ENCODE measurements at regions of chrX and their contacts with region 1.

Region 1: GRCh38 chrX:23907498-23908218 is at the starts of genes APOO and CXorf58:
- DNase-seq: peak; percentile 88 to 97 (median 90)
- ATAC-seq: peak; percentile 97
- H3K4me3 ChIP-seq: peak within 1 kb of the TSS; percentile 81
- H3K27ac ChIP-seq: peak within 1 kb of the TSS; percentile 92
- H3K4me1 ChIP-seq: peaks cover 3 to 12% of the 10 kb centered on the region in 2 experiments; a peak in 4 of 5 replicates
- H3K27me3 ChIP-seq: no peaks in the 10 kb centered on the region
- CTCF ChIP-seq: peak; percentile 88 to 99 (median 99)
- EP300 ChIP-seq: peak; percentile 4; the same call in 1 of the 2 replicates
- POLR2A ChIP-seq: peak; percentile 72; the same call in 1 of the 2 replicates
- RAD21 ChIP-seq: peak; percentile 63 to 73
- polyA plus RNA-seq, gene APOO: 46.5 to 76.4 TPM
- polyA plus RNA-seq, gene CXorf58: 0.10 to 0.13 TPM

Region 2: DNA sequence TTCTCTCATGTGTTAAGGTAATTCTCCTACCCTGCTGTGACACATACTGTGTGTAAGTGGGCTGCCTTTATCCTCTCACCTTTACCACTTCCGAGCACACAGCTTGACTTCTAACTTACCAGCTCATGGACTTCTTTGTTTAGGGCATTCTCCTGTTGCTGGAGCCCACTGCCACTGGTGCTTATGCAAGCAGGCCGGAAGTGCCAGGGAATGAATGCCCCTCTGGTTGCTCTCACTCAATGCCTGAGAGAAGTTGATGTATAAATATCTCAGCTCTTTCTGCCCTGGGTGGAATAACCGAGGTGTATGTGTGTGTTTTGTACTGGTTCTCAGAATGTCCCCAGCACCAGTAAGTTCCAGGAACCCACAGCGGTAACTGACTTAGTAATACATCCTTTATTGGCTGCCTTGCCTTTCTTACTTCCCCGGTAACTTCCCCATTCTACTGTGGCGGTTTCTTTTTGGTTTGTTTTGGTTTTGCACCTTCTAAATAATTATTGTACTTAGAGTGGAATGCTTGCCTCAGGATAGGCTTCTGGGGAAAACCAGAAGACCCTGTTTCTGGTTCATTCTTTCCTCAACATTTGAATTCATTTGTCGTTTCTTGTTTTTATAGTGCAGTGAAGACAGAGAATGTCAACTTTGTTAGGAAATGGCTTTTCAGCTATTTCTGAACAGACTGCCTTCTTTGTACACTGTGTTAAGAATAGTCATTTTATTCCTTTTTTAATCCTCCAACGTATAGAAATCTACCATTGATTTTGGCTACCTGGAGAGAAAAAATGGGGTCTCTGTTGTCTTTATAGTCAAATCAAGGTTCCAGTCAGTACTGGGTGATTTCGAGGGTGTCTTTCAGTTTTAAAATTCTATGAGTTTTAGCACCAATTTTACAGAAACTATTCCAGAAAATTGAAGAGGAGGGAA is 45.6 kb after region 1 on chrX:
- CTCF ChIA-PET with region 1: no interaction called
- POLR2A ChIA-PET with region 1: no interaction called
- in situ Hi-C with region 1: no loop called
- intact Hi-C with region 1: loop called (anchors 5 kb)
- DNase-seq: peak; percentile 10 to 73 (median 44)
- ATAC-seq: peak; percentile 83
- H3K4me3 ChIP-seq: peak overlapping the region; percentile 39
- H3K27ac ChIP-seq: peak overlapping the region; percentile 86
- H3K4me1 ChIP-seq: peaks cover 3% of the 10 kb centered on the region in 2 experiments; a peak in 2 of 5 replicates
- H3K27me3 ChIP-seq: no peaks in the 10 kb centered on the region
- CTCF ChIP-seq: no peak
- EP300 ChIP-seq: peak; percentile 55; the same call in 1 of the 2 replicates
- POLR2A ChIP-seq: peak; percentile 64
- RAD21 ChIP-seq: no peak

Region 3: DNA sequence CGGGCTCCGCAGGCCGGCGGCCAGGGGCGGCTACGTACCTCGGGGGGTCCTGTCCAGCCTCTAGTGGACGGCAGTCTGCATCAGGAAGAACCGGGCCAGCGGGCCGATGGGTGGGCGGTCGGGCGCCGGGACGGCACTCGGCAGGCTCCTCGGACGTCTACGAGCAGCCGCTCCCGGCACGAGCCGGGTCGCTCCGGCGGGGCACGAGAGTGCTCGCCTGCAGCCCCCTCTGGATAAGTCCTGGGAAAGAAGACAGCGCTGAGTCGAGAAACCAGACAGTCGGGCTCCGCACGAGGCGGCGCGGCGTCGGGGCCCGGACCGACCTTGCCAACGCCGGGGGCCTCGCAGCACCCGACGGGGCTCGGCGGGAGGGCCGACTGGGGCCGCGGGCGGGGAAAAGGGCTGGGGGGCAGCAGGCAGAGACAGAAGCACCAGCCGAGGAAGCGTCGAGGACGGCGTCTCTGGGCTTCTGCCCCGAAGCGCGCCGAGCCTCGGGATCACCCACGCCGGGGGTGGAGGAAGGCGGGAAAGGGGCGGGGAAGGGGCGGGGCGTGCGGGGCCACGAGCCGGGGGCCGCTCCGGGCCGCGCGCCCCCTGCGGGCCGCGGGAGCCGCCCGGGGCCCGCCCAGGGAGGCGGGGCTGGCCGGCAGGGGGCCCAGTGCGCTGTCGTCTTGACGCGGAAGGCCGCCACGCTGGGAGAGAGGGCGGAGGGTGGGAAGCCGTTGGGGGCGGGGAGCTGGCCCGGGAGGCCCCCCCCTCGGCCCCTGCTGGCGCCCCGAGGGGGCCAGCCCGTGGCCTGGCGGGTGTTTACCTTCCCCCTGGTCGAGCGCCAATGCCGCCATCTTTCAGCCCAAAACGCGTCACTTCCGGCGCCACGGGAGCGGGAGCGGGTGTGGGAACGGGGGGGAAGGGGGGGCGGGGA is 117.4 kb after region 1 on chrX:
- CTCF ChIA-PET with region 1: interaction called, 11 read pairs
- POLR2A ChIA-PET with region 1: interaction called, 3 read pairs
- in situ Hi-C with region 1: no loop called
- intact Hi-C with region 1: loop called (anchors 1 kb)
- DNase-seq: peak; percentile 88 to 94 (median 90)
- ATAC-seq: peak; percentile 88
- H3K4me3 ChIP-seq: peak overlapping the region; percentile 99
- H3K27ac ChIP-seq: peak overlapping the region; percentile 100
- H3K4me1 ChIP-seq: peaks cover 9 to 10% of the 10 kb centered on the region in 2 experiments; a peak in 3 of 5 replicates
- H3K27me3 ChIP-seq: no peaks in the 10 kb centered on the region
- CTCF ChIP-seq: peak in 2 of 3 experiments; percentile 59 to 80; a peak in 4 of 6 replicates
- EP300 ChIP-seq: peak; percentile 53
- POLR2A ChIP-seq: peak; percentile 85
- RAD21 ChIP-seq: no peak; a peak in 1 of 4 replicates

Region 4: DNA sequence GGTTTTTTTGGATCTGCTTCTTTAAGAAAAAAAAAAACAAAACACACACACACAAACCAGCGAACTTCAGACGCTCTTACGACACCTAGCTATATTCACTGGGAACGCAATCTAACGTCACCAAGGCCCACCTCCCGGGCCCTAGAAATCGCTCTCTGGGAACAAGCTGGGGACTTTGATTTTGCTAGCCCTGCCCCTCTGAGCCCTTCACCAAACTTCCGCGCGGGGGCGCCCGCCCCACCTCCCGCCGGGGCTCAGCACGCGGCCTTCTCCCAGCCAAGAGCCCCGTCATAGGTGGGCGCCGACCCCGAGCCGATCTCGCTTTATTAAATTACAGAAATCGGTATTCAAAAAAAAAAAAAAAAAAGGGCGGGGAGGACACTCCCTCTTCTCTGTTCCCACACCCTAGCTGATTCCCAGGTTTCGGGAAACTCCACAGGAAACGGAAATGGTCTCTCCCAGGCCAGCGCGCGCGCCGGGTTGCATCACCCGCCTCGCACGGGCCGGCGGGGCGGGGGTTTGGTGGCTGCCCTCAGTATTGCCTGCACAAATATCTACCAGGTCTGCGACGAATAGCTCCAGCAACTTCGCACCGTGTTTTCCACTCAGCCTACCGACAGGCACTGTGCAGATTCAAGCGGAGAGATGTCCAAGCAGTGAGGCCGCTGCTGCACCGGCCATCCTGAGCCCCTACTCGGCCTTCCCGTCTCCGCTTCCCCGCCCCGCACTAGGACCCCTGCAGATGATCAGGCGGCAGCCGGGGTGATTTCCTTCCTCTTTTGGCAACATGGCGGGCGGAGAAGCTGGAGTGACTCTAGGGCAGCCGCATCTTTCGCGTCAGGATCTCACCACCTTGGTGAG is 146.8 kb after region 1 on chrX and contains the start of gene EIF2S3:
- CTCF ChIA-PET with region 1: interaction called, 23 read pairs
- POLR2A ChIA-PET with region 1: interaction called, 15 read pairs
- in situ Hi-C with region 1: no loop called
- intact Hi-C with region 1: loop called (anchors 1 kb)
- DNase-seq: peak; percentile 79 to 95 (median 82)
- ATAC-seq: peak; percentile 95
- H3K4me3 ChIP-seq: no peak within 1 kb of the TSS
- H3K27ac ChIP-seq: no peak within 1 kb of the TSS; the same call in 1 of the 3 replicates
- H3K4me1 ChIP-seq: peaks cover 4 to 6% of the 10 kb centered on the region in 2 experiments; a peak in 2 of 5 replicates
- H3K27me3 ChIP-seq: no peaks in the 10 kb centered on the region
- CTCF ChIP-seq: peak; percentile 87 to 88 (median 88)
- EP300 ChIP-seq: peak; percentile 20; the same call in 1 of the 2 replicates
- POLR2A ChIP-seq: peak; percentile 94
- RAD21 ChIP-seq: peak; percentile 51 to 63
- polyA plus RNA-seq, gene EIF2S3: 148 to 192 TPM

Region 5: GRCh38 chrX:24241822-24242648 is 334.4 kb after region 1 on chrX:
- CTCF ChIA-PET with region 1: no interaction called
- POLR2A ChIA-PET with region 1: no interaction called
- in situ Hi-C with region 1: loop called (anchors 10 kb)
- intact Hi-C with region 1: loop called (anchors 5 kb)
- DNase-seq: peak; percentile 12 to 62 (median 36)
- ATAC-seq: peak; percentile 88
- H3K4me3 ChIP-seq: no peak overlapping the region
- H3K27ac ChIP-seq: no peak overlapping the region
- H3K4me1 ChIP-seq: no peaks in the 10 kb centered on the region; a peak in 1 of 5 replicates
- H3K27me3 ChIP-seq: no peaks in the 10 kb centered on the region
- CTCF ChIP-seq: peak; percentile 48 to 69 (median 53); a peak in 4 of 6 replicates
- EP300 ChIP-seq: no peak
- POLR2A ChIP-seq: no peak
- RAD21 ChIP-seq: peak; percentile 54 to 73

Measured in K562 (cell line).